Heart left ventricle (tissue), 16 donors: ENCODE measurements at regions of chr2 and their contacts with region 1.

Region 1: GRCh38 chr2:120312861-120313694 is 32.9 kb upstream of the INHBB start:
- DNase-seq: peak; percentile 74 to 89 (median 83)
- ATAC-seq: peak; percentile 60 to 87 (median 81)
- H3K4me3 ChIP-seq: peak overlapping the region in 11 of 12 donors; percentile 9 to 62 (median 47)
- H3K27ac ChIP-seq: peak overlapping the region in 4 of 12 donors; percentile 11 to 32 (median 14)
- H3K4me1 ChIP-seq: peaks cover 0 to 14% (median 7%) of the 10 kb centered on the region in 12 donors
- H3K27me3 ChIP-seq: no peaks in the 10 kb centered on the region
- CTCF ChIP-seq: peak; percentile 66 to 95 (median 88)
- POLR2A ChIP-seq: no peak

Region 2: GRCh38 chr2:119759451-119760236 is 553.4 kb before region 1 on chr2 and contains the start of gene PTPN4:
- intact Hi-C with region 1: loop called in 1 of 10 experiments (anchors 10 kb)
- DNase-seq: peak; percentile 97 to 98 (median 98)
- ATAC-seq: peak; percentile 97 to 98 (median 98)
- H3K4me3 ChIP-seq: peak within 1 kb of the TSS; percentile 62 to 95 (median 86)
- H3K27ac ChIP-seq: peak within 1 kb of the TSS; percentile 87 to 98 (median 96)
- H3K4me1 ChIP-seq: peaks cover 0 to 46% (median 33%) of the 10 kb centered on the region in 12 donors
- H3K27me3 ChIP-seq: no peaks in the 10 kb centered on the region
- CTCF ChIP-seq: peak in 2 of 12 donors; percentile 14 to 16
- POLR2A ChIP-seq: peak in 1 of 2 donors; percentile 84
- total RNA-seq, gene PTPN4: 21.2 to 49.0 (median 43.6) TPM

Region 3: GRCh38 chr2:120109186-120110061 is 203.7 kb before region 1 on chr2:
- intact Hi-C with region 1: loop called in 9 of 10 experiments (anchors 2 to 10 kb)
- DNase-seq: no peak
- ATAC-seq: peak; percentile 5 to 65 (median 48)
- H3K4me3 ChIP-seq: no peak overlapping the region
- H3K27ac ChIP-seq: no peak overlapping the region
- H3K4me1 ChIP-seq: peaks cover 3 to 29% (median 19%) of the 10 kb centered on the region in 12 donors
- H3K27me3 ChIP-seq: no peaks in the 10 kb centered on the region
- CTCF ChIP-seq: peak in 11 of 12 donors; percentile 20 to 58 (median 50)
- POLR2A ChIP-seq: no peak

Region 4: GRCh38 chr2:120223034-120223912 is 89.8 kb before region 1 on chr2 and contains the start of gene TMEM185B:
- intact Hi-C with region 1: loop called in 5 of 10 experiments (anchors 2 to 10 kb)
- DNase-seq: peak; percentile 90 to 96 (median 92)
- ATAC-seq: peak; percentile 87 to 98 (median 97)
- H3K4me3 ChIP-seq: peak within 1 kb of the TSS; percentile 38 to 89 (median 70)
- H3K27ac ChIP-seq: peak within 1 kb of the TSS; percentile 83 to 98 (median 90)
- H3K4me1 ChIP-seq: peaks cover 0 to 41% (median 25%) of the 10 kb centered on the region in 12 donors
- H3K27me3 ChIP-seq: no peaks in the 10 kb centered on the region
- CTCF ChIP-seq: peak in 7 of 12 donors; percentile 4 to 44 (median 26)
- POLR2A ChIP-seq: peak in 1 of 2 donors; percentile 74
- total RNA-seq, gene TMEM185B: 16.1 to 29.8 (median 26.8) TPM

Region 5: GRCh38 chr2:120252225-120253021 is 60.7 kb before region 1 on chr2 and contains the start of gene RALB:
- intact Hi-C with region 1: loop called (anchors 1 to 10 kb)
- DNase-seq: peak; percentile 100
- ATAC-seq: peak; percentile 96 to 97 (median 96)
- H3K4me3 ChIP-seq: peak within 1 kb of the TSS; percentile 57 to 97 (median 87)
- H3K27ac ChIP-seq: peak within 1 kb of the TSS; percentile 89 to 99 (median 94)
- H3K4me1 ChIP-seq: peaks cover 2 to 53% (median 43%) of the 10 kb centered on the region in 12 donors
- H3K27me3 ChIP-seq: no peaks in the 10 kb centered on the region
- CTCF ChIP-seq: no peak
- POLR2A ChIP-seq: peak in 1 of 2 donors; percentile 76
- total RNA-seq, gene RALB: 35.7 to 59.9 (median 45.1) TPM